Right ventricle myocardium inferior (tissue), 1 donor: ENCODE measurements at regions of chr5 and their contacts with region 1.

Region 1: DNA sequence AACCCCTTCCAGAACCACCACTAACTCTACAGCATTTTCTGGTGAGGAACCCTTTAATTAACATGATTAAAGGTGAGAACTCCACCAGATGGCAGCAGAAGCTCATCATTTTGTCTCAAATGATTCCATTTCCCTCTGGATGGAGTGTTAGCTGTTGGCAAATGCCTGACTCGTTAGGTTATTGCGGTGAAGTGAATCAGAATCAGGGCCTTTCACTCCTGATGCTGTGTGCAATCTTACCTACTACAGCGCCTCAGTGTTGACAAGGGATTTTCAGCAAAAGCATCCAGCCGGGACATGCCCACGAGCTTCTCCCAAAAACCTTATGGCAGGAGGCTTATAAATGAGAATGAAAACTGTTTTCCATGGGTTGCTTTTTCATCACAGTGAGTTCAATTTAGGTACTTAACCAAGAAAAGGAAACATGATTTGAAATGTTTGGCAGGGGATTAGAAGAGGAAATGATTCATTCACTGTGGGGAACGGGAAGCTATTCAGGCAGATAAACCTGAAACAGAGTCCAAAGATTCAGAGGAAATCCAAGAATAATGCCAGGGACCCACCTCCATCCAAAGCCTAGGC is 48.0 kb upstream of the CAST start:
- DNase-seq: no peak
- ATAC-seq: peak; percentile 79

Region 2: DNA sequence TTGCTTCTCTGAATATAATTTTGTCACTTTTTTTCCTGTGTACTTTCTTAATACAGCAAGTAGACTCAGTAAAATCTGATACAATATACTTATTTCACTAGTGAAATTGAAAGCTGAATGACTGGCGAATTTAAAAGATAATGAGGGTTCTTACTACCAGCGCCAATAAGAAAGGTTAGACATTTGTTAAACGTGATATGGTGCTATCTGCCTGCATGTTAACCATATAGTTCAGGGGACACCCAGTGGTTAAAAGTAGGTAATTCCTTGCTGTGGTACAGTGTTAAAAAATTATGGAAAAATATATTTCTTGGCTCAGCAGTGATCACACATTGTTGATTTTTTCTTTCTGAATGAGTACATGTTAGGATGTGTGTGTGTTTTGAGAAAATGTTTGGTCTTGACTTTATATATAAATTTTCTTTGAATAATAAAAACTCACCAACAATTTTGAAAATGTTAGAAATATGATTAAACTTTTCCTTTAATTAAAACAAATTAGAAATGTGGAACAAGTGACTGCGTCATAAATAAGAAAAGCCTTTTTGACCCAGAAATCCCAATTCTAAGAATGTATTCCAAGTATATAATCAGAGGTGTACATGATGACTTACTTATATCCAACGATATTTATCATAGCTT is 73.7 kb after region 1 on chr5:
- intact Hi-C with region 1: loop called (anchors 5 kb)
- DNase-seq: no peak
- ATAC-seq: peak; percentile 80

Region 3: DNA sequence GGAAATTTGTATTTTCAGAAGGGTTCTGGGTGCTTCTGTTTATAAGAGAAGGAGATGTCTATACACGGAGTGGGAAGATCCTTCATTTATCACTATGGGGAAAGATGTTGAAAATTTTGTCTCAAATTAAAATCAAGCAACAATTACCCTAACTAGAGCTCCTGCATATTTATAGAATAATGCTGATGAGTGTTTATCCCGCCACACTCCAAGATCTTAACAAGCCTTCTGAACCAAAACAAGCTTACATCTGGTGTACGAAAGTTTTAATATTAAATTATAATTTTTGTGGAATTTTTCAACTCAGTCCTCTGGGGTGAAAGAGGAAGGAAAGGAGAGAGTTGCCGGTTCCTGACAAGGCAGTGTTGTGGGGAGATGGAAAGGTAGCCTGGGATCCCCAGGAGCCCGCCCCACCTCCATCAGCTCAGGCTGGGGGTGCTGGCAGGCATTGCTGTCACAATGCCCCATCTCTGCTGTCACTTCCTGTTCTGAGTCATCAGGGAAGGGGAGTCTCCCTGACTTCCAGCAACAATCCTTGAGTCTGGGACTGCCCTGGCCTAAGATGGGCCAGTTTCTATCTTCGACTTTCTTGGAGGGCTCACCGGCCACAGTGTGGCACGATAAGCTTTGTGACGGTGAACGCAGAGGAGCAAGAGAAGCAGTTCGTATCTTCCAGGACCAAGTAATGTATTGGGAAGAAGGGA is 129.0 kb after region 1 on chr5:
- intact Hi-C with region 1: loop called (anchors 5 kb)
- DNase-seq: no peak
- ATAC-seq: no peak

Region 4: GRCh38 chr5:96876292-96876850 is 262.2 kb after region 1 on chr5 and contains the start of gene ERAP2:
- intact Hi-C with region 1: loop called (anchors 10 kb)
- DNase-seq: no peak
- ATAC-seq: peak; percentile 57
- total RNA-seq, gene ERAP2: 6.4 TPM

Region 5: GRCh38 chr5:97019435-97020117 is 405.4 kb after region 1 on chr5:
- intact Hi-C with region 1: loop called (anchors 10 kb)
- DNase-seq: no peak
- ATAC-seq: no peak